ENCODE measurements at regions of chr1 and their contacts with region 1.

Region 1: GRCh38 chr1:25487628-25488027 is 55.8 kb upstream of the LDLRAP1 start:
- DNase-seq: no peak
- ATAC-seq: no peak

Region 2: DNA sequence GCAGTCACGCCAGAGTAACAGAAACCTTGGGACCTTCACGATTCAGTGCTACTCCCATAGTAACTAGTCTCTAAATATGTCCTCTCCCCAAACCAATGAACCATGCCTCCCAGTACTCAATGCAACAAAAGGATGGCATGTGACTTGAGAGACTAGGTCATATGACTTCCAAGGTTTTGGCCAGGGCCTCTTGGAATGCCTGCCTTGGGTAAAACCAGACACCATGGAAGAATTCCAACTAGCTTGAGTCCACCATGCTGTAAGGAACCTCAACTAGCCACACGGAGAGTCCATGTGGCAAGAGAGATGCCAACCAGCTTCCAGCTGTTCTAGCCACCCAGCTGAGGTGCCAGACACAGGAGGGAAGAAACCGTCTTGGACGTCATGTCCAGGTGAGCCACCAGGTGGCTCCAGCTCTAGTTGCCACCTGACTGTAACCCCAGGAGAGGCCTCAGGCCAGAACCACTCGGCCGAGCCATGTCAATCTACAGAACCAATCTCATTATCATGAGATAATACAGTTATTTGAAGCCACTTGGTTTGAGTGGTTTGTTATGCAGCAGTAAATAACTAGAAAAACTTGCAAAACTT is 370.3 kb before region 1 on chr1:
- intact Hi-C with region 1: no loop called
- DNase-seq: no peak
- ATAC-seq: no peak

Region 3: DNA sequence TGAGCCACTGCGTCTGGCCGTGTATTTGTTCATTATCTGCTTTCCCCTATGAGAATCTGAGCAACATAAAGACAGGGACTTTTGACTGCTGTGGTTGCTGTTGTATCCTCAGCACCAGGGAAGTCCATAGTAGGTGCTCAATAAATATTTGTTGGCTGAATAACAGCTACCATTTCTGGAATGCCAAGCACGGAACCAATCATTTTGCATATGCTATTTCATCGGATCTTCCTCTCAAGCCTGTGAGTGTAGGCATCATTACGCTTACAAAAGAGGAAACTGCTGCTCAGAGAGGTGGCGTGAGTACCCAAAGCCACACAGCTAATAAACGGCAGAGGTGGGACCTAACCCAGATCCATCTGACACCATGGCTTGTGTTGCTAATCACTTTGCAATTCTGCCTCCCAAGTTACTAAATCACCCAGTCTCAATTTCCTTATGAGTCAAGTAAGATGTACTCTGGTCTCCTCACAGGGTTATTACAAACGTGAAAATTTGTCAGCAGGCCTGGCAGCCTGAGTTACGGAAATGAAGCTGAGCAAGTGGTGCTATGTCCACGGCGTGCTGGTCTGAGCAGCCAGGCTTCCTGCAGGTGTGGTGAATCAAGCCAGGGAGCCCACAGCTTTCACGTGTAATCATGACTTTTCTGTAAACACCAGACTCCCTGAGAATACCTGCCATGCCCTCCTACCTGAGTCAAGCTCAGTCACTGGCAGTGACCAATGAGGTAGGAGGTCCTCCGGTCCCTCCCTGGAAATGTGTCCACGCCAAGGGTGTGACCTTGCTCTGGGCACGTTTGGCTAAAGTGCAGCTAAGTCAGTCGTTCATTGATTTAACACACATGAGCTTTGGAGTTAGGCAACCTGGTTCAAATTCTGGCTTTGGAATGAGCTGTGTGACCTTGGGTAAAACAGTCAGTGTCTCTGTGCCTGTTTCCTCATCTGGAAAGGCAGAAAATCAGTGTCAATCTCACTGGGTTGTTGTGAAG is 62.2 kb before region 1 on chr1:
- intact Hi-C with region 1: loop called (anchors 10 kb)
- DNase-seq: no peak
- ATAC-seq: no peak

Region 4: GRCh38 chr1:25608488-25609178 is 121.0 kb after region 1 on chr1:
- intact Hi-C with region 1: no loop called
- DNase-seq: peak; percentile 94
- ATAC-seq: peak; percentile 88